Motor neuron (in vitro differentiated cells): ENCODE measurements at regions of chr2 and their contacts with region 1.

Region 1: DNA sequence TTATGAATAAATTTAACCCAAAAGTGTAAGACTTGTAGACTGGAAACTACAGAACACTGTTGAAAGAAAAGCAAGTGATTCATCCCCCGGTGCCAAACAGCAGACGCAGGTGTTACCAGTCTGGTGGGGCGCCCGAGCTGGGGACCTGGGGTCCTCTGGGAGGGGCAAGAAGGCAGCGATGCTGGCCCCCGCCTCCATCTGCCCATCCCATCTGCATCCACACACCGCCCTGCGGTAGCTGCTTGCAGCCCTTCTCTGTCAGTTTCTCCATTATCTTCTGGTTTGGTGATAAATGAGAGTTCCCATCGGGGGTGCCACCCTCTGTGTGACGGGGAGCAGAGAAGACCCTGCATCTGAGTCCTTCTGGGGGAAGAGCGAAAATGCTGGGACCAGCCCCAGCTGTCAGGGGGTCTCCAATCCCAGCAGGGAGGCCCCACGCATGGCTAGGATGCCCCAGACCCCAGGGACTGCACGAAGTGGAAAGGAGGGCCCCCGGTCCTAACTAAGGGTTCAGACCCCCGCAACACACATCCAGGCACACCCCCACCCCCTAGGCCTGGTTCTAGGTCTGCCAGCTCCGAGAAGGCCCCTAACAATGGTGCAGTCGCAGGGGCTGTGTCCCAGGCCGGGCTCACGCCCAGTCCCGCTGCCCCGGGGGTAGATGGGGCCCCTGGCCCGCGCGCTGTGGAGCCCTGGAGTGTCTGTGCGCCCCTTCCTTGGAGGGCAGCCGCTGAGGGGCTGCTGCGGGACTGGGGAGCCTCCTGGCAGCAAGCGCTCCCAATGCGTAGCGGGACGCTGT is 686 bp upstream of the RGPD8 start:
- ATAC-seq: no peak
- H3K4me3 ChIP-seq: peak overlapping the region in 1 of 5 donors; percentile 4
- H3K27ac ChIP-seq: no peak overlapping the region
- H3K4me1 ChIP-seq: peaks cover 4 to 6% of the 10 kb centered on the region in 2 donors

Region 2: DNA sequence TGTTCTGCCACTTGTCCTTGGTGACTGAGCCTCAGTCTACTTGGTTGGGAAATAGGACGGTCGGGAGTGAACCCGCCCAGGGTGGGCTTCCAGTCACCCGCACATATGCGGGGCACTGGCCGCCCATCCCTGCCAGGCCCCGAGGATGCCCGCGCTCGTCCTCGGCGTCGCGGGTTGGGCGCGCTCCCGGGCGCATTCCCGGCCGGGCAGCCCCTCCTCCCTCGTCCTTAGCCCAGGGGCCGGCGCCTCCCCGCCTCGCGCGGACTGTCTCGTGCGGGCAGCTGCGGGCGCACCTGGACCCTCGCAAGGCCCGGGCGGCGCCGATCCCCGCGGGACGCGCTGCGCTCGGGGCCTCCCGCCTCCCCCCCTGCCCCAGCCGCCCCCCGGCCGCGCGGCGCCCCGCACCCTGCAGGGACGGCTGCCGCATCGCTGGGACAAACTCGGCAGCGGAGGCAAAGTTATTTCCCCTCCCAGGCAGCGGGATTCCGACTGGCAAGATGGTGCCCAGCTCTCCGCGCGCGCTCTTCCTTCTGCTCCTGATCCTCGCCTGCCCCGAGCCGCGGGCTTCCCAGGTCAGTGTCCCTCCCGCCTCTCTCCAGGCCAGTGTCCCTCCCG is 295.9 kb before region 1 on chr2 and contains the start of gene FBLN7:
- in situ Hi-C with region 1: no loop called
- ATAC-seq: peak; percentile 56 to 84 (median 70)
- H3K4me3 ChIP-seq: peak within 1 kb of the TSS; percentile 40 to 47 (median 43)
- H3K27ac ChIP-seq: peak within 1 kb of the TSS in 1 of 2 donors; percentile 30
- H3K4me1 ChIP-seq: peaks cover 4 to 6% of the 10 kb centered on the region in 2 donors
- total RNA-seq, gene FBLN7: 0.13 to 5.0 (median 0.73) TPM

Region 3: GRCh38 chr2:112254466-112255239 is 179.5 kb before region 1 on chr2 and contains the start of gene ZC3H8:
- in situ Hi-C with region 1: loop called in 1 of 9 experiments (anchors 25 kb)
- ATAC-seq: peak; percentile 88 to 99 (median 98)
- H3K4me3 ChIP-seq: peak within 1 kb of the TSS; percentile 47 to 67 (median 57)
- H3K27ac ChIP-seq: peak within 1 kb of the TSS; percentile 66 to 81
- H3K4me1 ChIP-seq: peaks cover 3 to 10% of the 10 kb centered on the region in 2 donors
- total RNA-seq, gene ZC3H8: 13.7 to 43.4 (median 22.8) TPM

Region 4: GRCh38 chr2:112674229-112674628 is 240.1 kb after region 1 on chr2:
- in situ Hi-C with region 1: no loop called
- ATAC-seq: no peak
- H3K4me3 ChIP-seq: no peak overlapping the region
- H3K27ac ChIP-seq: no peak overlapping the region
- H3K4me1 ChIP-seq: no peaks in the 10 kb centered on the region